ENCODE measurements at regions of chr2 and their contacts with region 1.

Region 1: DNA sequence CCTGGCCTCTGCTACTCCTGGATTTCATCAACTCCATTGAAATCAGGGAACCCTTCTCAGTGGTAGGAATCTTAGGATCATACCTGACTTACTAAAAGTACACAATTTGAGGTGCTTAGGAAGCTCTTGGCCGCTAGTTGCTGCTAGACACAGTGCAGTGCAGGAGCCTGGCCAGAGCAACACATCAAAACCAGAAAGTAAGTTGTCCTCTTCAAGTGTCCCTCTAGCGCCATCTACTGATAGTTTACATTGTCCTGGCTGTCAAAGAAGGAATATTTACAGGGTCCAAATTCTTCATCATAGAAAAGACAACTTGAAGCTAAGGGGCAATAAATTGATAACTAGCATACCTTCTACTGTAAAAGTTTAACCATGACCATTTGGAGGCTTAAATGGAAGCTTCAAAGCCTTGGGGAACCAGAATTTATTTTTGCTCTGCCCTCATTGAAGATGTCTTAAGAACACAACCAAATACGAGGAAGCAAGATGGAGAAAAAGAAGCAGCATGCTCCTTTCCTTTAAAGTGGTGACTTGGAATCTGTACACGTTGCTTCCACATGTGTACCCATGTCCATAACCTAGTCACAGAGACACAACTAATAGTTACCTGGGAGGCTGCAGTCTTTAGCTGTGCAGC is 889.1 kb upstream of the GCFC2 start:
- DNase-seq: peak; percentile 32
- H3K4me3 ChIP-seq: no peak overlapping the region
- H3K27ac ChIP-seq: no peak overlapping the region
- H3K4me1 ChIP-seq: no peaks in the 10 kb centered on the region
- H3K27me3 ChIP-seq: no peaks in the 10 kb centered on the region
- CTCF ChIP-seq: peak in 10 of 11 experiments; percentile 22 to 60 (median 49)
- POLR2A ChIP-seq: no peak

Region 2: GRCh38 chr2:76197842-76198448 is 401.9 kb before region 1 on chr2:
- intact Hi-C with region 1: loop called (anchors 5 kb)
- DNase-seq: no peak
- H3K4me3 ChIP-seq: no peak overlapping the region
- H3K27ac ChIP-seq: no peak overlapping the region
- H3K4me1 ChIP-seq: no peaks in the 10 kb centered on the region
- H3K27me3 ChIP-seq: no peaks in the 10 kb centered on the region
- CTCF ChIP-seq: peak; percentile 18 to 79 (median 69)
- POLR2A ChIP-seq: no peak

Region 3: GRCh38 chr2:77108915-77109314 is 509.1 kb after region 1 on chr2:
- intact Hi-C with region 1: no loop called
- DNase-seq: no peak
- H3K4me3 ChIP-seq: no peak overlapping the region
- H3K27ac ChIP-seq: no peak overlapping the region
- H3K4me1 ChIP-seq: no peaks in the 10 kb centered on the region
- H3K27me3 ChIP-seq: no peaks in the 10 kb centered on the region
- CTCF ChIP-seq: no peak
- POLR2A ChIP-seq: no peak